Right cardiac atrium (tissue), 5 donors: ENCODE measurements at regions of chr11 and their contacts with region 1.

Region 1: DNA sequence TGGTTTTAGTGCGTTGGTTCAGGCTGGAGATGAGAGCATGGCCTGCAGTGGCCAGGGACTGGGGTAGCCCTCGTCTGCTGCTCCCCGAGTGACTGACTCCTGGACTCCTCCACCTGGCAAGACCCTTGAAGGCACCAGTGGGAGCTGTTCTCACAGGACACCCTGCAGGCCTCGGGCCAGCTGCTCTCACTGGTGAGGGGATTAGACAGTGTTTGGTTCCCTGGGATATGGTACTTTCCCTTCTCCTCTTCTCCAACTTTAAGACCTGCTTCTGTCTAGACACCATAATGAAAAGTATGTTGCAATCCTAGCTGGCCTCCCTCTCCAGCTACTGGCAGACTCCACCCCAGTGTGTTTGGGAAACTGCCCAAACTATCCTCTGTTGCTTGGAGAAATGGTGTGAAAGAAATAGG is 168.8 kb upstream of the CADM1 start:
- DNase-seq: peak; percentile 57 to 77 (median 74)
- ATAC-seq: peak; percentile 86 to 87
- H3K4me3 ChIP-seq: no peak overlapping the region
- H3K27ac ChIP-seq: no peak overlapping the region
- H3K4me1 ChIP-seq: no peaks in the 10 kb centered on the region
- H3K27me3 ChIP-seq: no peaks in the 10 kb centered on the region

Region 2: GRCh38 chr11:115334932-115335788 is 337.8 kb before region 1 on chr11:
- intact Hi-C with region 1: loop called in 1 of 4 experiments (anchors 10 kb)
- DNase-seq: no peak
- ATAC-seq: no peak
- H3K4me3 ChIP-seq: no peak overlapping the region
- H3K27ac ChIP-seq: no peak overlapping the region
- H3K4me1 ChIP-seq: no peaks in the 10 kb centered on the region
- H3K27me3 ChIP-seq: no peaks in the 10 kb centered on the region